Right cardiac atrium (tissue), 5 donors: ENCODE measurements at regions of chr6 and their contacts with region 1.

Region 1: GRCh38 chr6:170529839-170530469 is 23.2 kb downstream of the PSMB1 start:
- DNase-seq: peak; percentile 78 to 92 (median 88)
- ATAC-seq: peak; percentile 77 to 85
- H3K4me3 ChIP-seq: no peak overlapping the region
- H3K27ac ChIP-seq: peak overlapping the region; percentile 11
- H3K4me1 ChIP-seq: no peaks in the 10 kb centered on the region
- H3K27me3 ChIP-seq: no peaks in the 10 kb centered on the region

Region 2: DNA sequence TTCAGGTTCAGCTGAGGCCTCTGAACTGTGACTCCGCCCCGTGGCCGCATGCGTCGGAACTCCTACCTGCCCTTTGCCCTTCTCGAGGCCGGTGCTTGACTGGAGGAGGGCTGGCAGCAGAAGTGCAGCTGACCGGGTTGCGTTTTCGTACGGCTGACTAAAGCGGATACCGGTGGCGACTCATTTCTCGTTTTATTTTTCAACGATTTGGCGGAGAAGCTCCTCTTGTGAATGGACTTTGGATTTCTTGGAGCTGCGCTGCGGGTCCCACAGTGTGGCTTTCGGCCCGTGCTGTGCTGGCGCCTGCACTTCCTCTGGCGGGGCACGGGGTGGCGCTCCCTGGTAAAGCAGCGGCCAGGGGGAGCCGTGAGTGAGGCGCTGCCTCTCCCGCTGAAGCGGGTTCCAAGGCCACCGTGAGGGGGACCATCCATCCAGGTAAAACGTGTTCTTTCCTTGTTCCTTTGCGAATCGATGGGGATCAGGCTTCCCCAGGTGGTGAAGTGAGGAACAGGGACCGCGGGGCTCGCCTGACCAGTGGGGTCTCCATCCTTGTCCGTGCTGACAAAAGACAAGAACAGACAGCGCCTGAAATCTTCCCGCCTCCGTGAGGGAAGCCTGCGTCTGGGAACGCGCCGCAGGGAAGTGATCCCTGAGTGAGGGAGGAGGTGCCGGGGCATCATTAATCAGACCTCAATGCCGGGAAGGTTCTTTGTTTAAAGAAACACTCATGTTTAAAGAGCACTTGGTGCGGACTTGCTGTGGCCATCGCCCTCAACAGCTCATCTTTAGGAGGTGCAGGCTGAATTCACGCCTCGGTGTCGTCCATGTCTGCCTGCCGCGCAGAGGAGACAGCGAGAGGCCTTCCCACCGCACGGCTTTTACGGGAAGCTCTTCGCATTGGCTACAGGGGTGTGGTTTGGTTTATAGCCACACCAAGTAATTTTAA is 739.7 kb before region 1 on chr6:
- intact Hi-C with region 1: loop called in 3 of 4 experiments (anchors 5 to 10 kb)
- DNase-seq: peak; percentile 76 to 88 (median 87)
- ATAC-seq: peak; percentile 96 to 97
- H3K4me3 ChIP-seq: peak overlapping the region; percentile 19
- H3K27ac ChIP-seq: peak overlapping the region; percentile 16
- H3K4me1 ChIP-seq: no peaks in the 10 kb centered on the region
- H3K27me3 ChIP-seq: no peaks in the 10 kb centered on the region

Region 3: DNA sequence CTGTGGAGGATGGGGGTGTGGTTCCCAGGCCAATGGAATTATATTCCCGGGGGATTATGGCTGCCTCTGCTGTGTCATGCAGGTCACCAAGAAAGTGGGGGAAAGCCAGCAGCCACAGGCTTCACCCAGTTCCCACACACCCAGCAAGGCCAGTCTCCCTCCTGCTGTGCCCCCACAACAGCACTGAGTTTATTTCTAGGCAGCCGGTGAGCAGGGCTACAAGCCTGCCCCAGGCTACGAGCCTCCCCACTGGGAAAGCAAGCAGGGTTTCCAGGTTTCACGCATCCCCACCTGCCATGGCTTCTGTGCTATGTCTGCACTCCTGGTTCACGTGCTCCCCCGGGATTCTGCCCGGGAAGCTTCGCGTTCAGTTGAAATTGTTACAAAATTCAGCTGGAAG is 705.9 kb before region 1 on chr6:
- intact Hi-C with region 1: loop called in 1 of 4 experiments (anchors 10 kb)
- DNase-seq: peak in 1 of 3 donors; percentile 28
- ATAC-seq: peak in 1 of 2 donors; percentile 20
- H3K4me3 ChIP-seq: no peak overlapping the region
- H3K27ac ChIP-seq: no peak overlapping the region
- H3K4me1 ChIP-seq: no peaks in the 10 kb centered on the region
- H3K27me3 ChIP-seq: no peaks in the 10 kb centered on the region

Region 4: DNA sequence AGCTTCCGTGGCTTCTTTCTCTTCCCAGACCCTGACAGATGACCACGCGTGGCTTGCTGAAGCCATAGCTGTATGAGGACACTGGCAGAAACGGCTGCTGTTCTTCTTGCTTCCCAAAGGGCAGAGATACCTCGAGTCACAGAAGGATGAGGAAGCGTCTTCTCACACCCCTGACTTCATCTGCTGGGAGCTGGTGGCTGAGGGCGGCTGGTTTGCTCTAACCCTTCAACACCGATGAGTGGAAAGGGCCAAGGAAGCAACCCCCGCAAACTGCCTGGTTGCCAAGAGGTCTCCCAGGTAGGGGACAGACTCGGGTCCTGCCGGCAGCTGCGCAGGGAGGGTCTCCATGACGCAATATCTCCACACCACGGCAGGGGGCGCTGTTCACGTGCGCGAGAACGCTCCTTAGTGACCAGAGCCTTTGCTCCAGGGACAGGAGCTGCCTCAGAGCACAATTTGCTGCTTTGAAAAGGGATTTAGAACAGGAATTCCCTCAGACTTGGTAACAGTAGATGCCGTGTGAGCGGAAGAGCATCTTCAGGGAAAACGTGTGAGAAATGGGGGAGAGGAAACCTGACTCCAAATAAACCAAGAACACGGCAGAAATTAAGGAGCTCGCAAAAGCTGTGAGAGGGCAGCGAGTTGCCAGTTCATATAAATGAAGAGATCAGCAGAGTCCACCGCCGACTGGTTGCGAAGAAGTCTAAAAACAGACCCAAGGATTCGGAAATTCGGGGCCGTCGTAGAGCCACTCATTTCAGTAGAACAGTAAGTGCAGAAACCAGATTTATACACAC is 698.3 kb before region 1 on chr6:
- intact Hi-C with region 1: loop called in 3 of 4 experiments (anchors 5 to 10 kb)
- DNase-seq: peak; percentile 64 to 88 (median 86)
- ATAC-seq: peak; percentile 87 to 93
- H3K4me3 ChIP-seq: no peak overlapping the region
- H3K27ac ChIP-seq: no peak overlapping the region
- H3K4me1 ChIP-seq: no peaks in the 10 kb centered on the region
- H3K27me3 ChIP-seq: no peaks in the 10 kb centered on the region

Region 5: DNA sequence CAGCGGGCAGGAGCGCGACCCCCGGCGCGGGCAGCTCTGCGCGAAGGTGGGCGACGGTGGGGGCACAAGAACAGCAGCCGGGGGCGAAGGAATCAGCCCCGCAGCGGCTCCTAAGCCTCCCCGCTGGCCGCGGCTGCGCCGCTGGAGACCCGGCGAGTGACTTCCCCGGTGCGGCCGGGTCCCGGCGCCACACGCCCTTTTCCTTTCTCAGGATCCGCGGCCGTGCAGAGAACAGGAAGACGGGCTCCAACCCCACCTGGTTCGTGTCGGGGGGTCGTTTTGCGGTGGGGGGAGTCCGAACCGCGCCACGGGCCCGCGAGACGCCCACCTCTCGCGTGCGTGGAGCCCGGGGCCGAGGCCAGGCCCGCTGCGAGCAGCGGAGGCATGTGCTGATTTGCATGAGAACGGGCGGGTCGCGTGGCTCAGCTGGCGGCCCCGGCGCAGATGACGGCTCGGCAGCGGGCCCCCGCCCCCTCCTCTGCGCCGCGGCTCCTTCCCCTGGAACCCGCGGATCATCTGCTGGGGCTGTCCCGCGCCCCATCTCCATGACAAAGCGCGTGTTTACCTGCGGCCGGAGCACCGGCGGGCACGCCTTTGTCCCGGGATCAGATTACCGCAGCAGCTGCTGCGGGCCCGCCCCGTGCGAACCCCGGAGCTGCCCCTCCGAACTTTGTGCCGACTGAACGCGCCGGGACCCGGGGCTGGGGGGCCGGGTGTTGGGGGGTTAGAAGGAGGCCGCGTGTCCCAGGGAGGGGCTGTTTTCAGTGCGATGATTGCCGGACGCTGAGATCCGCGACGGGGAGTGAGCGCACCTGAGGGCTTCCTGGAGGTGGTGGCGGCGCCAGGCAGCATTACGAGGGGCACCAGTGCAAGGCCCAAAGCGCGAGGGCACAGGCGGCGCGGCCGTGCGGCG is 234.2 kb before region 1 on chr6:
- intact Hi-C with region 1: loop called in 3 of 4 experiments (anchors 10 kb)
- DNase-seq: peak in 2 of 3 donors; percentile 65 to 73
- ATAC-seq: peak; percentile 21 to 28
- H3K4me3 ChIP-seq: peak overlapping the region; percentile 38
- H3K27ac ChIP-seq: no peak overlapping the region
- H3K4me1 ChIP-seq: peaks cover 10% of the 10 kb centered on the region
- H3K27me3 ChIP-seq: no peaks in the 10 kb centered on the region

Region 6: GRCh38 chr6:170306324-170307079 is 223.5 kb before region 1 on chr6 and contains the start of gene FAM120B:
- intact Hi-C with region 1: loop called in 1 of 4 experiments (anchors 10 kb)
- DNase-seq: peak; percentile 98 to 99 (median 99)
- ATAC-seq: peak; percentile 99
- H3K4me3 ChIP-seq: peak within 1 kb of the TSS; percentile 62
- H3K27ac ChIP-seq: peak within 1 kb of the TSS; percentile 66
- H3K4me1 ChIP-seq: peaks cover 9% of the 10 kb centered on the region
- H3K27me3 ChIP-seq: no peaks in the 10 kb centered on the region
- total RNA-seq, gene FAM120B: 25.8 to 31.9 (median 29.5) TPM

Region 7: DNA sequence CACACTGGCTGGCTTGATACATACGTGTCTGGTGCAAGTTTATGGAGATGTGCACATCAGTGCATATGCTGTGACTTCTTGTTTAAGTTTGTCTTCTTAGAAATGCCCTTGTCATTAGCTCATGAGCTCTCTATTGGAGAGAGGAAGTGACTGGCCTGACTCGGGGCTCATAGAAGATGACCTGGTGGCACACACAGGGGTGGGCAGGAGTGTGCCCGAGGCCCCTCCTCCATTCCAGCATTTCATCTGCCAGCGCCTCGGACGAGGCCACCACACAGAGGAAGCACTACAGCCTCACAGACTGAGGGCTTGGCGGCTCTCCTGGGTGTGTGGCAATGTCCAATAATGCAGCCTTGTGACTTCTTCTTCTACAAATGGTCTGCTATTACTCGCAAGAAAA is 113.7 kb before region 1 on chr6:
- intact Hi-C with region 1: no loop called
- DNase-seq: no peak
- ATAC-seq: no peak
- H3K4me3 ChIP-seq: no peak overlapping the region
- H3K27ac ChIP-seq: no peak overlapping the region
- H3K4me1 ChIP-seq: no peaks in the 10 kb centered on the region
- H3K27me3 ChIP-seq: no peaks in the 10 kb centered on the region

Region 8: DNA sequence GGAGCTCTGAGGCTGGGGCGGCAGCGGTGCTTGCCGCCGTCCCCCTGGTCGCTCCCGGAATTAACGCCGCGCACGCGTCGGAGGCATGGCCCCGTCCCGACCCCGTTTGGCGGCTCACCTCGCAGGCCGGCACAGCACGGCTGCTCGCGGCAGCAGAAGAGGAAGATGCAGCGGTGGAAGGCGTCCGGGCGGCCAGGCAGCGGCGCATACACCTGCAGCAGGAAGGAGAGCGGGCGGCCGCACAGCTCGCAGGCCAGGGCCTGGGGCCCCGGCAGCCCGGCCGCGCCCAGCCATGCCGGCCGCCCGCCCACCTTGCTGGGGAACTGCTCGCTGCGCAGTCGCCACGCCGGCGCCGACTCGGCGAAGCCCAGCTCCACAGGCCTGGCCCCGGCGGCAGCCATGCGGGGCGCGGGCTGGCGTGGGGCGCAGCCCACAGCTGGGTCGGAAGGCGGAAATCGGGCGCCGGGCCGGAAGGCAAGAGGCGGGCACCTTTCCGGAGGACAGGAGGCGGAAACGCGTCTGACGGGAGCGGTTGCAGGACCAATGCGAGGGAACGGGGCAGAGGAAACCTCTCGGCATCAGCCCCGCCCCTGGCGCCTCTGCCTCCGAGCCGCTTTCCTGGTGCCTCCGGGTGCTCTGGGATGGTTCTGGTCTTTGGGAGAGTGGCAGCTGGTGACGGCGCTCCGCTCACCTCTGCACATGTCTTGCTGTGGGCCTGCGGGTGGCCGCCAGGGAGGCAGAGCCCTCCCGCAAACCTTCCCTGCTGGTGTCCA is 54.4 kb after region 1 on chr6 and contains the start of gene PDCD2:
- intact Hi-C with region 1: no loop called
- DNase-seq: peak; percentile 95 to 97 (median 97)
- ATAC-seq: peak; percentile 99
- H3K4me3 ChIP-seq: peak within 1 kb of the TSS; percentile 55
- H3K27ac ChIP-seq: peak within 1 kb of the TSS; percentile 80
- H3K4me1 ChIP-seq: peaks cover 2% of the 10 kb centered on the region
- H3K27me3 ChIP-seq: no peaks in the 10 kb centered on the region
- total RNA-seq, gene PDCD2: 26.1 to 36.4 (median 30.9) TPM